Adrenal gland (tissue), 19 donors: ENCODE measurements at regions of chr9 and their contacts with region 1.

Region 1: DNA sequence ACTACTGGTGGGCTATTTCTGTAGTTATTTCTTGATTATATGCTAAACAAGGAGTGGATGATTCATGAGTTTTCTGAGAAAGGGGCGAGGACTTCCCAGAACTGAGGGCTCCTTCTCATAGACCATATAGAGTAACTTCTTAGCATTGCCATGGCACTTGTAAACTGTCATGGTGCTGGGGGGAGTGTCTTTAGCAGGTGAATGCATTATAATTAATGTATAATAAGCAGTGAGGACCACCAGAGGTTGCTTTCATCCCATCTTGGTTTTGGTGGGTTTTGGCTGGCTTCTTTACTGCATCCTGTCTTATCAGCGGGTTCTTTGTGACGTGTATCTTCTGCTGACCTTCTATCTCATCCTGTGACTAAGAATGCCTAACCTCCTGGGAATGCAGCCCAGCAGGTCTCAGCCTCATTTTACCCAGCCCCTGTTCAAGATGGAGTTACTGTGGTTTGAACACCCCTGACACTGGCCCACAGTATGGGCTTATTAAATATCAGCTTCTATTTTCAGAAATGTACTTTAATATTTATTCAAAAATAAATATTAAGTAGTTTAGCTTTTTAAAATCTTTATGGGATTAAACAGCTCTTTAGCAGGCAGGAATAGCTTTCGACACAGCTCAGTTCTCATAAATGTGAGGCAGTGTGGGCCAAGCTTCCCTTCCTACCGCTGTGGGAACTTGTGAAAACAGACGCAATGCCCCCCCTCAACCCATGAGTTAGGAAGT is 44.4 kb downstream of the GALNT12 start:
- DNase-seq: peak in 1 of 7 donors; percentile 27
- H3K4me3 ChIP-seq: no peak overlapping the region
- H3K27ac ChIP-seq: no peak overlapping the region
- H3K4me1 ChIP-seq: peaks cover under 1 to 13% of the 10 kb centered on the region in 2 donors
- H3K27me3 ChIP-seq: no peaks in the 10 kb centered on the region
- CTCF ChIP-seq: no peak
- POLR2A ChIP-seq: no peak

Region 2: GRCh38 chr9:99140685-99141314 is 288.9 kb after region 1 on chr9:
- intact Hi-C with region 1: loop called in 1 of 2 experiments (anchors 10 kb)
- DNase-seq: peak; percentile 38 to 69 (median 47)
- H3K4me3 ChIP-seq: no peak overlapping the region
- H3K27ac ChIP-seq: no peak overlapping the region
- H3K4me1 ChIP-seq: no peaks in the 10 kb centered on the region
- H3K27me3 ChIP-seq: no peaks in the 10 kb centered on the region
- CTCF ChIP-seq: peak; percentile 71 to 96 (median 90)
- POLR2A ChIP-seq: no peak